GM10248 (cell line): ENCODE measurements at regions of chr3 and their contacts with region 1.

Region 1: DNA sequence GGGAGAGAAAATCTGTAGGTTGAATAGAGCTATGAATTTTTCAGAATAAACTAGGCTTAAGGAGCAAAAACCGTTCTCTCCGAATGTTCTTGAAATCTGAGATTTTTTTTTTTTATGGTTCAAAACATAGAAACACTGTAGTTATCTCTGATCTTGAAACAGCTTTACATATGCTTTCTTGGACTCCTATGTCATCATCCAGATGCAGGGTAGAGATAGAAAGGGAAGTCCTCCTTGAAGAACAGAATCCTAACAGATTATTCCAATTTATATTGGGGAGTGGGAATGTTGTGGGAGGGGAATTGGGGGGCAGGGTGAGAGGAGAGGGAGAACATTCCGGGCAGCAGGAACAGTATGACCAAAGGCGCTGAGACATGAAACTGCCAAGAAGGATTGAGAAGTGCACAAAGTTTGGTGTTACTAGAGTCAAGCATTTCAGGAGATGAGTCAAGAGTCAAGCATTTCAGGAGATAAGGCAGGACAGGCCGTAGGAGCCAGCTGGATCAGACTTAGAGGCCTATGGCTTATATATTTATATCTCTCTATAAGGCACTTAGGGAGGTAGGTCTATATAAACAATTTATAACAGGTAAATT is 21.9 kb upstream of the ST3GAL6 start:
- DNase-seq: no peak
- CTCF ChIP-seq: no peak

Region 2: GRCh38 chr3:98726084-98726483 is 15.1 kb before region 1 on chr3:
- CTCF ChIA-PET with region 1: interaction called, 10 read pairs
- POLR2A ChIA-PET with region 1: no interaction called
- DNase-seq: no peak
- CTCF ChIP-seq: no peak

Region 3: GRCh38 chr3:99674086-99674789 is 933.0 kb after region 1 on chr3:
- CTCF ChIA-PET with region 1: no interaction called
- POLR2A ChIA-PET with region 1: no interaction called
- DNase-seq: no peak
- CTCF ChIP-seq: no peak